Posterior cingulate gyrus (tissue), 11 donors: ENCODE measurements at regions of chr7 and their contacts with region 1.

Region 1: GRCh38 chr7:12686894-12687717 is at the start of gene ARL4A:
- DNase-seq: peak; percentile 97 to 100 (median 99)

Region 2: GRCh38 chr7:12444785-12445184 is 242.3 kb before region 1 on chr7:
- intact Hi-C with region 1: no loop called
- DNase-seq: no peak

Region 3: GRCh38 chr7:12623897-12624498 is 63.1 kb before region 1 on chr7:
- intact Hi-C with region 1: no loop called
- DNase-seq: no peak

Region 4: GRCh38 chr7:13117103-13117502 is 430.0 kb after region 1 on chr7:
- intact Hi-C with region 1: loop called (anchors 10 kb)
- DNase-seq: no peak

Region 5: DNA sequence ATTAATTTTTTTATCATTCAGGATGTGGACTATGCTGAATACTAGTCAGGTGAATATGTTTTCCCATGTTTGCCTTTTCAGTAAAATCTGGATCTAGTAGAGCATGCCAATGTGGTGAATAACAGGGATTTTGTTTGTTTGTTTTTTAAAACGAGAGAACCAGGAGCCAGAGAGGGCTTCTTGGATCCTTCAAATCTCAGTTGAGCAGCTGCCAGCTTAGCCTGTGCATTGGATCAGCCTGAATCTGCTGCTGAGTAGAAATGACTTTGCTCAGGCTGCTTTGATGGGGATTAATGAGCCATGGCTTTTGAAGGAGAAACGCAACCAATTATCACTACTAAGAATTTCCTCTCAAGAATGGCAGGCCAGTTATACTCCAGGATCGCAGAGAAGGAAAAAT is 494.1 kb after region 1 on chr7:
- intact Hi-C with region 1: loop called (anchors 5 kb)
- DNase-seq: peak in 2 of 10 donors; percentile 9 to 37